ENCODE measurements at regions of chr9 and their contacts with region 1.

Region 1: GRCh38 chr9:3525836-3526164 is at the start of gene RFX3:
- DNase-seq: peak; percentile 86 to 95 (median 92)
- H3K4me3 ChIP-seq: peak within 1 kb of the TSS; percentile 95
- H3K4me3 Mint-ChIP-seq: peak within 1 kb of the TSS; percentile 89 to 99 (median 95)
- H3K27ac ChIP-seq: peak within 1 kb of the TSS; percentile 100
- H3K27ac Mint-ChIP-seq: peak within 1 kb of the TSS; percentile 97 to 100 (median 100)
- H3K4me1 ChIP-seq: peaks cover 50% of the 10 kb centered on the region
- H3K4me1 Mint-ChIP-seq: peaks cover 58 to 75% (median 73%) of the 10 kb centered on the region in 3 donors
- H3K27me3 ChIP-seq: no peaks in the 10 kb centered on the region
- H3K27me3 Mint-ChIP-seq: peaks cover 0 to 15% of the 10 kb centered on the region in 2 donors
- total RNA-seq, gene RFX3: 14.1 to 14.6 TPM

Region 2: GRCh38 chr9:2838371-2839000 is 687.3 kb before region 1 on chr9:
- CTCF ChIA-PET with region 1: no interaction called
- POLR2A ChIA-PET with region 1: interaction called, 14 read pairs
- DNase-seq: no peak
- H3K4me3 ChIP-seq: no peak overlapping the region
- H3K4me3 Mint-ChIP-seq: peak overlapping the region in 1 of 7 donors; percentile 11
- H3K27ac ChIP-seq: no peak overlapping the region
- H3K27ac Mint-ChIP-seq: peak overlapping the region in 6 of 8 donors; percentile 21 to 78 (median 42)
- H3K4me1 ChIP-seq: peaks cover 21% of the 10 kb centered on the region
- H3K4me1 Mint-ChIP-seq: peaks cover 24 to 38% (median 28%) of the 10 kb centered on the region in 3 donors
- H3K27me3 ChIP-seq: no peaks in the 10 kb centered on the region
- H3K27me3 Mint-ChIP-seq: no peaks in the 10 kb centered on the region

Region 3: GRCh38 chr9:3478549-3478953 is 47.2 kb before region 1 on chr9:
- CTCF ChIA-PET with region 1: interaction called, 5 read pairs
- POLR2A ChIA-PET with region 1: interaction called, 26 read pairs
- DNase-seq: peak in 1 of 5 donors; percentile 46
- H3K4me3 ChIP-seq: no peak overlapping the region
- H3K4me3 Mint-ChIP-seq: peak overlapping the region; percentile 77 to 90 (median 87)
- H3K27ac ChIP-seq: no peak overlapping the region
- H3K27ac Mint-ChIP-seq: peak overlapping the region; percentile 69 to 98 (median 92)
- H3K4me1 ChIP-seq: peaks cover 25% of the 10 kb centered on the region
- H3K4me1 Mint-ChIP-seq: peaks cover 47 to 73% (median 73%) of the 10 kb centered on the region in 3 donors
- H3K27me3 ChIP-seq: no peaks in the 10 kb centered on the region
- H3K27me3 Mint-ChIP-seq: no peaks in the 10 kb centered on the region

Measured in CD8-positive, alpha-beta memory T cell (primary cell).